CD4-positive, alpha-beta T cell (primary cell): ENCODE measurements at regions of chrX and their contacts with region 1.

Region 1: DNA sequence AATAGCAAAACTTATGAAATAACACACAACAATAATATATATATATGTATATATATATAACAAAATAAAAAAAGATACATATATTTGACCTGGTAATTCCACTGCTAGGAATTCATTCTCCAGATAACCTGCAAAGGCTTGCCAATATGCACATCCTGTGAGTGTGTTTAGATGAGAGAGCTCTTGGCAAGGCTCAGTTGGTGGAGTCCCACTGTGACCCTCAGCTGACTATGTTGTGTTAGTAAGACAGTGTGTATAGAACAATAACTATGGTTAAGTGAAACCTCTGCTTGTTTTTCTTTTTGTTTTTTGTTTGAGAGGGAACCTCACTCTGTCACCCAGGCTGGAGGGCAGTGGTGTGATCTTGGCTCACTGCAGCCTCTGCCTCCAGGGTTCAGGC is 39.5 kb upstream of the RBMX start:
- DNase-seq: no peak
- ATAC-seq: no peak
- H3K4me3 ChIP-seq: no peak overlapping the region
- H3K4me3 Mint-ChIP-seq: no peak overlapping the region
- H3K27ac ChIP-seq: no peak overlapping the region
- H3K27ac Mint-ChIP-seq: no peak overlapping the region
- H3K4me1 ChIP-seq: peaks cover 2% of the 10 kb centered on the region
- H3K4me1 Mint-ChIP-seq: peaks cover 3% of the 10 kb centered on the region
- H3K27me3 ChIP-seq: no peaks in the 10 kb centered on the region
- H3K27me3 Mint-ChIP-seq: no peaks in the 10 kb centered on the region
- CTCF ChIP-seq: no peak

Region 2: GRCh38 chrX:136572030-136572429 is 348.0 kb before region 1 on chrX:
- CTCF ChIA-PET with region 1: no interaction called
- POLR2A ChIA-PET with region 1: no interaction called
- intact Hi-C with region 1: loop called in 1 of 2 experiments (anchors 5 kb)
- DNase-seq: peak in 3 of 14 experiments; percentile 28 to 36 (median 29)
- ATAC-seq: peak; percentile 34
- H3K4me3 ChIP-seq: no peak overlapping the region
- H3K4me3 Mint-ChIP-seq: peak overlapping the region; percentile 34
- H3K27ac ChIP-seq: no peak overlapping the region
- H3K27ac Mint-ChIP-seq: peak overlapping the region; percentile 17
- H3K4me1 ChIP-seq: peaks cover 3% of the 10 kb centered on the region
- H3K4me1 Mint-ChIP-seq: peaks cover 9% of the 10 kb centered on the region
- H3K27me3 ChIP-seq: no peaks in the 10 kb centered on the region
- H3K27me3 Mint-ChIP-seq: no peaks in the 10 kb centered on the region
- CTCF ChIP-seq: peak; percentile 27

Region 3: DNA sequence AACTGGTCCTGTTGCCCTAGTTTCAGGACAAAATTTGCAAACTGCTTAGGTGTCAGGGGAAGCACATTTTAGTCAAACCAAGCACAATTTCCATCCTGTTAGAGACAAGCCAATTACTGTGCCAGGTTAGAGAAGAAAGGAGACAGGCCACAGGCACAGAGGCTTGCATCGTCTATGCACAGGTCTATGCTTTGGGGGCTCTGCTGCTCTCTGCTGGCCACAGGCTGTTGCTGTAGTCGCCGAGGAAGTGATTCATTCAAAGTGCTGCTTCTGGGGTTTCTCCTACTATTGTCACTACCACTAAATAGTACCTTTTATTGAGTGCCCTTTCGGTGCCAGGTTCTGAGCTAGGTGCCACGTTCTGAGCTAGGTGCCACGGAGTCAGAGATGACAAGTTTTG is 342.4 kb before region 1 on chrX:
- CTCF ChIA-PET with region 1: no interaction called
- POLR2A ChIA-PET with region 1: no interaction called
- intact Hi-C with region 1: loop called (anchors 2 to 5 kb)
- DNase-seq: peak; percentile 45 to 85 (median 62)
- ATAC-seq: peak; percentile 100
- H3K4me3 ChIP-seq: no peak overlapping the region
- H3K4me3 Mint-ChIP-seq: no peak overlapping the region
- H3K27ac ChIP-seq: no peak overlapping the region
- H3K27ac Mint-ChIP-seq: peak overlapping the region; percentile 61
- H3K4me1 ChIP-seq: peaks cover 12% of the 10 kb centered on the region
- H3K4me1 Mint-ChIP-seq: peaks cover 13% of the 10 kb centered on the region
- H3K27me3 ChIP-seq: no peaks in the 10 kb centered on the region
- H3K27me3 Mint-ChIP-seq: no peaks in the 10 kb centered on the region
- CTCF ChIP-seq: peak; percentile 63

Region 4: GRCh38 chrX:136711147-136711546 is 208.9 kb before region 1 on chrX:
- CTCF ChIA-PET with region 1: interaction called, 4 read pairs
- POLR2A ChIA-PET with region 1: no interaction called
- intact Hi-C with region 1: loop called (anchors 2 to 5 kb)
- DNase-seq: peak in 5 of 14 experiments; percentile 8 to 50 (median 39)
- ATAC-seq: no peak
- H3K4me3 ChIP-seq: no peak overlapping the region
- H3K4me3 Mint-ChIP-seq: no peak overlapping the region
- H3K27ac ChIP-seq: peak overlapping the region in 1 of 2 donors; percentile 59
- H3K27ac Mint-ChIP-seq: peak overlapping the region; percentile 96
- H3K4me1 ChIP-seq: peaks cover 36% of the 10 kb centered on the region
- H3K4me1 Mint-ChIP-seq: peaks cover 50% of the 10 kb centered on the region
- H3K27me3 ChIP-seq: no peaks in the 10 kb centered on the region
- H3K27me3 Mint-ChIP-seq: no peaks in the 10 kb centered on the region
- CTCF ChIP-seq: no peak

Region 5: DNA sequence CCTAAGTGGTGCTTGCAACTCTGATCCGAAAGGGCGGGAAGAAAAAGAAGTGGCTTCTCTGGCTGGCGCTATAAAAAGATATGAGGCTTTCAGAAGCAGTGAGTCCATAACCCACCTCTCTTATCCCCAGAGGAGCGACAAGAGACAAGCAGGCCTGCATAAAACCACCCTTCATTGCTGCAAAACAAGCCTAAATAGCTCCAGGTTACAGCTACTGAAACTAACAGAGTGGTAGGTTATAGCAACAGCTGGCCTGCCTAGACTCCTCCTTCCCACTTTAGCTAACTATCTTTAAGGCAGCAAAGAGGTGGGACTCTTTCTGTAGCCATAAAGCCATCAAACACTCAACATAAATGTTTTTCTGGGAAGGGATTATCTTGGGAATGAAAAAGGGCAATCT is 358.8 kb after region 1 on chrX:
- CTCF ChIA-PET with region 1: no interaction called
- POLR2A ChIA-PET with region 1: no interaction called
- intact Hi-C with region 1: no loop called
- DNase-seq: no peak
- ATAC-seq: no peak
- H3K4me3 ChIP-seq: no peak overlapping the region
- H3K4me3 Mint-ChIP-seq: no peak overlapping the region
- H3K27ac ChIP-seq: no peak overlapping the region
- H3K27ac Mint-ChIP-seq: no peak overlapping the region
- H3K4me1 ChIP-seq: no peaks in the 10 kb centered on the region
- H3K4me1 Mint-ChIP-seq: no peaks in the 10 kb centered on the region
- H3K27me3 ChIP-seq: no peaks in the 10 kb centered on the region
- H3K27me3 Mint-ChIP-seq: no peaks in the 10 kb centered on the region
- CTCF ChIP-seq: no peak

Region 6: GRCh38 chrX:137432608-137433007 is 512.6 kb after region 1 on chrX:
- CTCF ChIA-PET with region 1: no interaction called
- POLR2A ChIA-PET with region 1: no interaction called
- intact Hi-C with region 1: no loop called
- DNase-seq: no peak
- ATAC-seq: no peak
- H3K4me3 ChIP-seq: no peak overlapping the region
- H3K4me3 Mint-ChIP-seq: no peak overlapping the region
- H3K27ac ChIP-seq: no peak overlapping the region
- H3K27ac Mint-ChIP-seq: no peak overlapping the region
- H3K4me1 ChIP-seq: peaks cover 17% of the 10 kb centered on the region
- H3K4me1 Mint-ChIP-seq: peaks cover 5% of the 10 kb centered on the region
- H3K27me3 ChIP-seq: peaks cover 18 to 42% of the 10 kb centered on the region in 2 experiments
- H3K27me3 Mint-ChIP-seq: peaks cover 41% of the 10 kb centered on the region
- CTCF ChIP-seq: no peak